ENCODE measurements at regions of chr11 and their contacts with region 1.

Region 1: DNA sequence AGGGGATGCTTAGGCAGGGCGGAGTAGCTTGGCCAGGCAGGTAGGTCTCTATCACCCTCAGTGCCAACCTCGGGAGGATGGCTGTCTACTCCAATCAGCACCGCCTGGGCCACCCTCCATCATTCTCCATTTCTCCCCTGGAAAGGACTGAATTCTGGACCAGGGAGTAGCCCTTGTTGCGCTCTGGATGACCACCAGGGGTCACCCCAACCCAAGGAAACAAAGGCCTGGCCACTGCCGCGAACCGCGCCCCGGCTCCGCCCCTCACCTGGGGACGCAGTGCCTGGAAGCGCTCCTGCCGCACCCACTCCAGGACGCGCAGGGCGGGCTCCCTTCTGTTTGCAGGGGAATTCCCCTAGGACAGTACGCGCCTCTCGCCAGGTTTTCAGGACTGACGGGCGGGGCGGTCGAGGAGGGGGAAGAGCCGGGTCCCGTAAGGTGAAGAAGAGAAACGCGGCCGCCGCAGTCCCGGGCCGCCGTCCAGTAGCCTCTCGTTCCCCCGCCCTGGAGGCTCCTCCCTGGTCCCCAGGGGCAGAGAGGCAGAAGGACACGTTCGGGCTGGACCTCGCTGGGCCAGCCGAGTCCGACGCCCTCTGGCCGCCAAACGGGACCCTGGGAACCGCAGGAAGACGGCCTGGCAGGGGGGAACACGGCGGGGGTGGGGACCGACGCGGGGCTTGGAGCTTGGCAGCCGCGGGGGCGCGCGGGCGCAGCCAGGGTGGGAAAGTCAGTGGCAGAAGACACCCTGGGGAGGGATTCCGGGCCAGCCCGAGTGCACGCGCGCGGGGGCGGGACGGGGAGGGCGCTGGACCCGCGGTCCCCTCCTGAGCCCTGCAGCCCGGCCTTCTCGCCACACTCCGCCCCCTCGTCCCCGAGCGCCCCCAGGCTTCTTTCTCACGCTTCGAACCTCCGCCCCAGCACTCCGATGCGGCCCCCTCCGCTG is 7.1 kb downstream of the SCN4B start:
- DNase-seq: peak; percentile 76 to 95 (median 82)
- ATAC-seq: peak; percentile 93
- H3K4me3 ChIP-seq: peak overlapping the region; percentile 80
- H3K4me3 Mint-ChIP-seq: peak overlapping the region; percentile 84
- H3K27ac ChIP-seq: no peak overlapping the region
- H3K27ac Mint-ChIP-seq: no peak overlapping the region
- H3K4me1 ChIP-seq: peaks cover 16% of the 10 kb centered on the region
- H3K4me1 Mint-ChIP-seq: peaks cover 5% of the 10 kb centered on the region
- H3K27me3 ChIP-seq: peaks cover 18 to 60% of the 10 kb centered on the region in 2 experiments
- H3K27me3 Mint-ChIP-seq: peaks cover 81% of the 10 kb centered on the region
- CTCF ChIP-seq: peak; percentile 79

Region 2: GRCh38 chr11:118060869-118061268 is 84.7 kb before region 1 on chr11:
- CTCF ChIA-PET with region 1: no interaction called
- POLR2A ChIA-PET with region 1: no interaction called
- intact Hi-C with region 1: no loop called
- DNase-seq: peak in 1 of 14 experiments; percentile 15
- ATAC-seq: no peak
- H3K4me3 ChIP-seq: no peak overlapping the region
- H3K4me3 Mint-ChIP-seq: no peak overlapping the region
- H3K27ac ChIP-seq: no peak overlapping the region
- H3K27ac Mint-ChIP-seq: no peak overlapping the region
- H3K4me1 ChIP-seq: no peaks in the 10 kb centered on the region
- H3K4me1 Mint-ChIP-seq: no peaks in the 10 kb centered on the region
- H3K27me3 ChIP-seq: no peaks in the 10 kb centered on the region
- H3K27me3 Mint-ChIP-seq: no peaks in the 10 kb centered on the region
- CTCF ChIP-seq: no peak

Region 3: DNA sequence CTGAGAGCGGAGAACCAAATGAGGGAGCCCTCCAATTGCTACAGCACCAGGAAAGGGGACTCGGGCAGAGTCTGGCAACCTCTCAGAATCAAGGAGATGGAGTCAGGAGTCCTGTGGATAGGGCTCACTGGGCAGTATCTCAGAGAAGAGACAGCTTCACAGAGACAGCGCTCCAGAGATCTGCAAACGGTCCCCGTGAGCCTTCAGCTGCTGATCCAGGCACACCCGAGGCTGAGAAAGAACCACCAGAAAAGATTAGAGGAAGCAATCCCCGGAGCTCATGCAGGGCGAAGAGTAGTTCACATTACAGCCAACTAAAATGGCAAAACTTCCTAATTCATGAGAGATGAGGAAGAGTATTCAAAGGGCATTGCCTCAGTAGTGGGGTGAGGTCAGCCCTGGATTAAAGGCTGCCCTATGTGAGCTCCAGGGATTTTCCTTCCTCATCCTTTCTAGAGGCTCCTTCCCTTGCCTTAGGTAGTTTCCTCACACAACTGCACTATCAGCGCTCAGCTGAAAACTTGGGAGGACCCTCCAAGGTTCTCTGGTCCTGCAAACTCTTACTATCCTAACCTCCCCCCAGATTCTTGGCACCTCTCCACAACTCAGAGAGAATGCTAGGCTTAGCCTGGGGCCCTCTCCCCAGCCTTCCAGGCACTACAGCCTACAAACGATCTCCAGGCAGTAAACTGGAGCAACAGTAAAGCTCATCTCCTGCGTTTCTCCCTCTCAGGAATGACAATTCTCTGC is 16.7 kb before region 1 on chr11:
- CTCF ChIA-PET with region 1: no interaction called
- POLR2A ChIA-PET with region 1: no interaction called
- intact Hi-C with region 1: no loop called
- DNase-seq: no peak
- ATAC-seq: no peak
- H3K4me3 ChIP-seq: no peak overlapping the region
- H3K4me3 Mint-ChIP-seq: no peak overlapping the region
- H3K27ac ChIP-seq: no peak overlapping the region
- H3K27ac Mint-ChIP-seq: no peak overlapping the region
- H3K4me1 ChIP-seq: no peaks in the 10 kb centered on the region
- H3K4me1 Mint-ChIP-seq: no peaks in the 10 kb centered on the region
- H3K27me3 ChIP-seq: no peaks in the 10 kb centered on the region
- H3K27me3 Mint-ChIP-seq: peaks cover 8% of the 10 kb centered on the region
- CTCF ChIP-seq: no peak

Region 4: DNA sequence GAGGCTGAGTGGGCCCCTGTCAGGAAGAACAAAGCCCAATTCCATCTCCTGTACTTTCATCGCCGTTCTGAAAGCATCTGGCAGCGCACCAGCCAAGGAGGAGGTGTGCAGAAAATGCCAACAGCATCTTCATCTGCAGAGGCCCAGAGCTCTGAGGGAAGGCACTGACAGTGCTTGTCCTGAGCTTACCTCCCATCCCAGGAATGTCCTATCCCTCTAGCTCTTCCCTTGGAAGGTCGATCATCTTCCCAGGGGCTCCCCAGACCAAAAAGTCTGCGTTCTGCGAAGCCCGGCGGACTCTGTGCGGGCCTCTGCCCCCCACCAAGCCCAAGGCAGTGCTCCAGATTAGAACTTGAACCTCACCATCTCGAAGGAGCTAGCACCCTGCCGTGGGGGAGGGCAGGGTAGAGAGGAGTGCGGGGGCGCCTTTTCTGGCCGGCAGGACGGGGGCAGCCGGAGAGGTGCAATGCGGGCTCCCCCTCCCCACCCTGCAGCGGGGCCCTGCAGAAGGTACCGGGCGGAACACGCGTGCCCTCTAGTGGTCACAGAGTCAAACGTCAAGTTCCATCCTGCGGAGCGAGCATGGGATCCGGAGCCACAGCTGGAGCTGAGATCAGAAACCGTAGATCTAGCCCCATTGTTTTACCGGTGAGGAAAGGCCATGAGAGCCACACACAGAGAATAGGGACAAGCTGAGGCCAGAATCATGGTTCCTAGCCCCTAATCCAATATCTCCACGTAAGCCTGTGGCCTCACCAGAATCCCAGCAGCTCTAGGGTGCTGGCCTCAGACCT is 25.9 kb after region 1 on chr11:
- CTCF ChIA-PET with region 1: interaction called, 6 read pairs
- POLR2A ChIA-PET with region 1: no interaction called
- intact Hi-C with region 1: loop called (anchors 1 kb)
- DNase-seq: peak; percentile 53 to 88 (median 66)
- ATAC-seq: peak; percentile 99
- H3K4me3 ChIP-seq: no peak overlapping the region
- H3K4me3 Mint-ChIP-seq: no peak overlapping the region
- H3K27ac ChIP-seq: no peak overlapping the region
- H3K27ac Mint-ChIP-seq: no peak overlapping the region
- H3K4me1 ChIP-seq: peaks cover 8% of the 10 kb centered on the region
- H3K4me1 Mint-ChIP-seq: peaks cover 5% of the 10 kb centered on the region
- H3K27me3 ChIP-seq: peaks cover 0 to 2% of the 10 kb centered on the region in 2 experiments
- H3K27me3 Mint-ChIP-seq: peaks cover 11% of the 10 kb centered on the region
- CTCF ChIP-seq: peak; percentile 94

Region 5: DNA sequence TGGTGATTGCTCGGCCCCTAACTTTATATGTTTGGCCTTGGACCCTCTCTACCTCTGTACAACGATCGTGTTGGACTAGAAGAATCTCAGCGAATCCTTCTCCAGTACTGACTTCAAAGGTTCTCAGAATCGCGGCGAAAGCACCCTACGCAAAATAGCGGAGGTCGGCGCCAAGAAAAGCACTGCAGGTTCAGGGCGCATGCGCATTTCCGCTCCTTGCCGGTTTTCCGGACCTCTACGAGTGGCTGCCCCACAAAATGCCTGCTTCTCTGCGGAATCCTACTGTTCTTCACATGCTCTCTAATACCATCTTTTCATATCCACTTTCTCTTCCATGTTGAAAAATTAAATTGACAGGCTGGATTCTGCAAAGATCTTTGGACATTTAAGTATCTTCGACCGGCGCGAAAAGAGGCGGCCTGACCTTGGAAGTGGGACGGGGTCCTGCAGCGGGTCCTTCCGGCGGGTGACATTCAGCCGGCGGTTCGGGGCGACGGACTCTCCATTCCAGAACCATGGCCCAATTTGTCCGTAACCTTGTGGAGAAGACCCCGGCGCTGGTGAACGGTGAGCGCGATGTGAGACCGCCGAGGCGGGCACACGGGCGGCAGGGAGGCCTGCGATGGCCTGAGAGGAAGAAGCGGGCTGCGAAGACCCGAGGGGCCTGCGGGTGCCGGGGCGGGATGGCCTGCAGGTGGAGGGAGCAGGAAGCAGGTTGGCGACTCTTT is 255.8 kb after region 1 on chr11 and contains the start of gene ATP5MG:
- CTCF ChIA-PET with region 1: no interaction called
- POLR2A ChIA-PET with region 1: no interaction called
- intact Hi-C with region 1: loop called in 1 of 2 experiments (anchors 5 kb)
- DNase-seq: peak; percentile 87 to 98 (median 92)
- ATAC-seq: peak; percentile 58
- H3K4me3 ChIP-seq: peak within 1 kb of the TSS; percentile 97
- H3K4me3 Mint-ChIP-seq: peak within 1 kb of the TSS; percentile 93
- H3K27ac ChIP-seq: peak within 1 kb of the TSS; percentile 90 to 93
- H3K27ac Mint-ChIP-seq: peak within 1 kb of the TSS; percentile 96
- H3K4me1 ChIP-seq: peaks cover 46% of the 10 kb centered on the region
- H3K4me1 Mint-ChIP-seq: peaks cover 77% of the 10 kb centered on the region
- H3K27me3 ChIP-seq: no peaks in the 10 kb centered on the region
- H3K27me3 Mint-ChIP-seq: no peaks in the 10 kb centered on the region
- CTCF ChIP-seq: no peak
- total RNA-seq, gene ATP5MG: 147 to 153 TPM

Region 6: DNA sequence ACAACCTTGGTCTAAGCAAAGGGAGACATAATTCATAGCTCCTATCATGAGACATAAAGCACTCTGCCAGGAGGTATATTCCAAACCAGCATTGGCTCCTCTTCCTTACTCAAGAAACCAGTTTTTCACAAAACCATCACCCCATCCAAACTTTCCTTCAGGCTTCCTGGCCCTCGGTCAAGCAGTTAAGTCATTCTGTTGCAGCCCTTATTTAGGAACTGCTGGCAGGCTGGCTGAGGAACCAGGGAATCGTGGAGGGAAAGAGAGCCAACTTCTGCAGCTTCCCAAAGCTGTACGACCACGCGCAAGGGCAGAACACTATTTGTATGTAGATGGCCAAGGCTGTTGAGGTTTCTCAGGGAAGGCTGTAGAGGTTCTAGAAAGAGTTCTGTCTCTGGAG is 419.5 kb after region 1 on chr11:
- CTCF ChIA-PET with region 1: no interaction called
- POLR2A ChIA-PET with region 1: no interaction called
- intact Hi-C with region 1: loop called in 1 of 2 experiments (anchors 5 kb)
- DNase-seq: peak in 1 of 14 experiments; percentile 13
- ATAC-seq: no peak
- H3K4me3 ChIP-seq: no peak overlapping the region
- H3K4me3 Mint-ChIP-seq: peak overlapping the region; percentile 65
- H3K27ac ChIP-seq: no peak overlapping the region
- H3K27ac Mint-ChIP-seq: peak overlapping the region; percentile 95
- H3K4me1 ChIP-seq: peaks cover 12% of the 10 kb centered on the region
- H3K4me1 Mint-ChIP-seq: peaks cover 22% of the 10 kb centered on the region
- H3K27me3 ChIP-seq: no peaks in the 10 kb centered on the region
- H3K27me3 Mint-ChIP-seq: no peaks in the 10 kb centered on the region
- CTCF ChIP-seq: no peak

Region 7: GRCh38 chr11:118659314-118659952 is 513.9 kb after region 1 on chr11:
- CTCF ChIA-PET with region 1: no interaction called
- POLR2A ChIA-PET with region 1: no interaction called
- intact Hi-C with region 1: loop called in 1 of 2 experiments (anchors 5 kb)
- DNase-seq: peak; percentile 80 to 91 (median 88)
- ATAC-seq: peak; percentile 100
- H3K4me3 ChIP-seq: no peak overlapping the region
- H3K4me3 Mint-ChIP-seq: no peak overlapping the region
- H3K27ac ChIP-seq: no peak overlapping the region
- H3K27ac Mint-ChIP-seq: no peak overlapping the region
- H3K4me1 ChIP-seq: peaks cover 10% of the 10 kb centered on the region
- H3K4me1 Mint-ChIP-seq: no peaks in the 10 kb centered on the region
- H3K27me3 ChIP-seq: no peaks in the 10 kb centered on the region
- H3K27me3 Mint-ChIP-seq: no peaks in the 10 kb centered on the region
- CTCF ChIP-seq: peak; percentile 94

Measured in CD4-positive, alpha-beta T cell (primary cell).